K562 (cell line): ENCODE measurements at regions of chr11 and their contacts with region 1.

Region 1: DNA sequence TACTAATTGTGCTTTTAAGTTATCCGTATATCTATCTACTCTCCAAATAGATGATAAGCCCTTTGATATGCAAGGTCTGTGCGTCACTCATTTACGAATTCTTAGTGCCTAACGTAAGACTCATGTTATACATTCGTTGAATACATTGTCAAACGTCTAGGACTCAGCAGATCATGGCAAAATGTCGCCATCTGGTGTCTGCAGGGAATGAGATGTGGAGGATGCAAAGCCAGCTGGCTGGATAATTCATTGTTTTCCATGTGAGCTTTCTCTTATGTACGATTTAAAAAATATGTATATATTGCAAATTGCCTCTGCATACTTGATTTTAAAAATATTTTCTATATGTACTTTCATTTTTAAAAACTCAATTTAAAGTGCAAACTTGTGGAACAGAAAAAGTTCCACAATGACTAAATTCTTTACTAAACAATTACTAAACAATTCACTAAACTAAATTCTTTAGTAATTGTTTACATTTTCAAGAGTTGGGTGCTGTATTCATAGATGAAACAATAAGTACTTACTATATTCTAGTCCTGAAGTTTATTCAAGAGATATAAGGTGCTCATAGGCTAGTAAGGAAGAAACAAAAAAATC is 33.8 kb downstream of the ZNF202 start:
- DNase-seq: peak; percentile 57 to 72 (median 59)
- ATAC-seq: peak; percentile 92
- H3K4me3 ChIP-seq: no peak overlapping the region
- H3K27ac ChIP-seq: no peak overlapping the region
- H3K4me1 ChIP-seq: no peaks in the 10 kb centered on the region; a peak in 1 of 5 replicates
- H3K27me3 ChIP-seq: peaks cover 0 to 5% of the 10 kb centered on the region in 2 experiments; a peak in 1 of 5 replicates
- CTCF ChIP-seq: peak; percentile 64 to 87 (median 72)
- EP300 ChIP-seq: no peak
- POLR2A ChIP-seq: no peak
- RAD21 ChIP-seq: peak; percentile 82 to 88

Region 2: GRCh38 chr11:123580557-123581275 is 127.0 kb before region 1 on chr11:
- CTCF ChIA-PET with region 1: interaction called, 15 read pairs
- POLR2A ChIA-PET with region 1: no interaction called
- in situ Hi-C with region 1: no loop called
- intact Hi-C with region 1: loop called (anchors 1 kb)
- DNase-seq: peak; percentile 67 to 89 (median 80)
- ATAC-seq: peak; percentile 94
- H3K4me3 ChIP-seq: no peak overlapping the region
- H3K27ac ChIP-seq: no peak overlapping the region
- H3K4me1 ChIP-seq: peaks cover 0 to 10% of the 10 kb centered on the region in 2 experiments; a peak in 1 of 5 replicates
- H3K27me3 ChIP-seq: peaks cover 0 to 31% of the 10 kb centered on the region in 2 experiments; a peak in 1 of 5 replicates
- CTCF ChIP-seq: peak; percentile 84 to 97 (median 89)
- EP300 ChIP-seq: no peak
- POLR2A ChIP-seq: no peak
- RAD21 ChIP-seq: peak; percentile 36 to 65

Region 3: GRCh38 chr11:123640677-123641494 is 66.8 kb before region 1 on chr11:
- CTCF ChIA-PET with region 1: interaction called, 21 read pairs
- POLR2A ChIA-PET with region 1: interaction called, 3 read pairs
- in situ Hi-C with region 1: loop called (anchors 5 kb)
- intact Hi-C with region 1: loop called (anchors 1 kb)
- DNase-seq: peak; percentile 67 to 81 (median 74)
- ATAC-seq: peak; percentile 98
- H3K4me3 ChIP-seq: no peak overlapping the region
- H3K27ac ChIP-seq: no peak overlapping the region
- H3K4me1 ChIP-seq: no peaks in the 10 kb centered on the region
- H3K27me3 ChIP-seq: peaks cover 8 to 48% of the 10 kb centered on the region in 2 experiments
- CTCF ChIP-seq: peak; percentile 81 to 86 (median 86)
- EP300 ChIP-seq: no peak
- POLR2A ChIP-seq: no peak
- RAD21 ChIP-seq: peak; percentile 78 to 84